Left ventricle myocardium superior (tissue), 1 donor: ENCODE measurements at regions of chr1 and their contacts with region 1.

Region 1: DNA sequence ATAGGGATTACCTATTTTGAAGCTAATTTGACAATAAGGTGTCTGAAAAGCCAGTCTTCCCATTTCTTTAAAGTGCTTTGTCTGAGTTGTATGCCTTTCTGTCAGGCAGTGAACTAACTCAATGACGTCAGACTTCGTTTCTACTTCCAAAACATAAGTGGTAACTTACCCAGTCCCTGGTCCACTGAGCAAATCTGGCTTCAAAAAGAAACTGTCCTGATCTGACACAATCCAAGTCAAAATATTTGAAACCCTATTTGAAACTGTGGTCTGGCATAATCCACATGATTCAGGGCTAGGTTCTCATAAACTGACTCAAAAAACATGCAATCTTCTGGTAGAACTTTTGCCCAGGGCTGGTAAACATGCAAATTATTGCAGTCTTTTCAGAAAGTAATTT is 34.0 kb downstream of the DIRAS3 start:
- DNase-seq: no peak
- ATAC-seq: no peak

Region 2: GRCh38 chr1:66112744-66113400 is 1903.5 kb before region 1 on chr1:
- intact Hi-C with region 1: loop called (anchors 5 kb)
- DNase-seq: no peak
- ATAC-seq: no peak

Region 3: DNA sequence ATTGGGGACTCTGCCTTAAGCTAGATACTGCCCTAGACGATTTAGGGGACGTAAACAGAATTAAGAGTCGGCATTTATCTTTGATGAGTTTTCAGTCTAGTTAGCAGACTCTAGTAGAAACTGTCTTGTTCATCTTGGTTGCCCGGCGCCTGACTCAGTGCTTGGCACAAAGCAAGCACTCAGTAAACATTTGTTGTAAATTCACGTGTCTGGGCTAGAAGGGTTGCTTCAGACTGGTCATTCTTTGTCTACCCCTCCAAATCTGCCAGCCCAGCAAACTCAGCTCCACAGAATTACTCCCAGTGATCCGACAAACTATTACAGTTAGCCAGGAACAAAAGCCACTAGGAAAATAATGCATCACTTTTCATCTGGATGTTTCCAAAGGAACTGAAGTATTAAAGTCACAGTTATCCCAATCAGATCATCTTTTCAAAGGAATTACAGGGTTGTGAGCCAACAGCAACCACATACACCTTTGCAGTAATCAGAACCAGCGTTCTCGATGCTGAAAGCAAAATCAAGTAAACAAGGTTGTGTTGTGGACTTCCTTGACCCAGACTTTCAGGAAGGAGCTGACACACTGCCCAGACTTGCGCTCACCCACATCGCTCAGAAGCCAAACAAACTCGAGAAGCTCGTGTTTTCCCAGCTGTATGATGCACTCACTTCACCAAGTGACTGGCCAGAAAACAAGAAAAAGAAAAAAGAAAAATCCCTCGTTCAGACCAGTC is 397.9 kb before region 1 on chr1:
- intact Hi-C with region 1: no loop called
- DNase-seq: peak; percentile 41
- ATAC-seq: peak; percentile 92

Region 4: DNA sequence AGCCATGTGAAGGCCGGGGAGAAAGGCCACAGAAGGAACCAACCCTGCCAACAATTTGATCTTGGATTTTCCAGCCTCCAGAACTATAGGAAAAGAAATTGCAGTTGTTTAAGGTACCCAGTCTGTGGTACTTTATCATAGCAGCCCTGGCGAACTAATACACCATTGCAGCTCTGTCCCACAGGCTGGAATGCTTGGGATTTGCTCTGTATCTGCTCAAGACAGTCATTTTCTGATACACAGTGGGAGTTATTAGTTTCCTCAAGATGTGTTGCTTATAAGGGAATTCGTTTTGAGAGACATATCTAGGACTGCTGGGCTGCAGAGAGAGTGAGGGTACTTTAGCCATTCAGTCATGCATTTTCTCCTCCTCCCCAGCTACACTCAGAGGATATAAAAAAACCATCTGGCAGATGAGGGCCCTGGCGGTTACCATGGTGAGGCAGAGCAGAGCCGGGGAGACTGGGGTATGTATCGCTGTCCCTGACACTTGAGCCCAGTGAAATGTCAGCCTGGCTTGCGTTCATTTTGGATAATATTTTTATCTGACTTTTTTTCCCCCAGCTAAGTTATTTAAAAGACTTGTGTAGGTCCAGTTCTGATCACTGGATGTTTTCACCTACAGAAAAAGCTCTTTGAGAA is 70.5 kb before region 1 on chr1:
- intact Hi-C with region 1: no loop called
- DNase-seq: peak; percentile 52
- ATAC-seq: peak; percentile 95

Region 5: DNA sequence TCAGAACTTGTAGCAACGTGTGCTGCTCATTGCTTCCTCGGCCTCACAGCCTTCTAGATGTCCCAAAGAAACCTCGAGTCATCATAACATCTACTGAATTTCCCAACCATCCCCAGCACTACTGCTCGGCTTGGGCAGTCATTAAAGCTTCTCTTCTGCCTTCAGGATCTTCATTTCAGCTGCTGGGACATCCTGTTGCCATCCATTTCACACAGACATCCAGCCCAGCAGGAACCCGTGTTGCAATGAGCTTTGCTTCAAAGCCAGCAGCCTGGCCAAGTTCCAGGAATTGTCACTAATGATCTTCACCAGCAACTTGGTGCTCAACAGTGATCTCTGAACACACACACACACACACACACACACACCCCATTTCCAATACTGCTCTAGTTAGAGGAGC is 197.5 kb after region 1 on chr1:
- intact Hi-C with region 1: no loop called
- DNase-seq: peak; percentile 78
- ATAC-seq: peak; percentile 79